ENCODE measurements at regions of chr11 and their contacts with region 1.

Region 1: GRCh38 chr11:13759050-13759449 is 90.6 kb downstream of the FAR1 start:
- DNase-seq: no peak
- H3K4me3 ChIP-seq: no peak overlapping the region
- H3K27ac ChIP-seq: no peak overlapping the region
- H3K4me1 ChIP-seq: no peaks in the 10 kb centered on the region
- H3K27me3 ChIP-seq: no peaks in the 10 kb centered on the region
- CTCF ChIP-seq: no peak
- POLR2A ChIP-seq: no peak

Region 2: DNA sequence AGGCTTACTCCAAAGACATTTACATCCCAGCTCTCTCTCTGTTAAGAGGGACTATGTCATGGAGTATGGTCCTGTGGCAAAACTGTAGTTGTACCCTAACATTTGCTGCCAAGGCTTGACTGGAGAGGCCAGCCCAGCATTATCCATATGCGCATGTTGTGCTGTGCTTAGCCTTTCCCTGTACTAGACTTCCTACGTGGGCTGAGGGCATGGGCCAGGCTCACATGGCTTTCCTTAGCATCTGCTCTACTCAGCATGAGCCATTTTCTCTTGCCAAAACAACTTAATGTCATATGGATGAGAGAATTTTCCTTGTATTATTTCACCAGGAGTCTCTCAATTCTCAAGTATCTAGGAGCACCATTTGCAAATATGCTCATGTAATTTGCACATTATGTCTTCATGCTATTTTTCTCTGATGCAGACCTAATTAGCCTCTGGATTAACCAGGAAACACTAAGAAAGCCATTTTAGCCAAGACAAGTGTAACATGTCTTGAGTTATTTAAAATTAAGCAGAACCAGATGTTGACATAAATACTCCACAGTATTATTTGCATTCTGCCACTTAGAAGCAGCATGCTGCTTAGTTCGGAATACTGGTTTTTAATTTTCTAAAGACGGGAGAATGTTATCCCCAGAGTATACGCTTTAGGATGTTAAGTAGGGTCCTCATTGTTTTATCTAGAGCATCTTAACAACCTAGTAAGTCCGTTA is 162.3 kb before region 1 on chr11:
- intact Hi-C with region 1: no loop called
- DNase-seq: no peak
- H3K4me3 ChIP-seq: no peak overlapping the region
- H3K27ac ChIP-seq: no peak overlapping the region
- H3K4me1 ChIP-seq: no peaks in the 10 kb centered on the region
- H3K27me3 ChIP-seq: no peaks in the 10 kb centered on the region
- CTCF ChIP-seq: no peak
- POLR2A ChIP-seq: no peak

Region 3: GRCh38 chr11:14029971-14030920 is 271.2 kb after region 1 on chr11:
- intact Hi-C with region 1: loop called (anchors 10 kb)
- DNase-seq: peak; percentile 77 to 88
- H3K4me3 ChIP-seq: no peak overlapping the region
- H3K27ac ChIP-seq: peak overlapping the region; percentile 68 to 70
- H3K4me1 ChIP-seq: peaks cover 0 to 10% of the 10 kb centered on the region in 2 donors
- H3K27me3 ChIP-seq: no peaks in the 10 kb centered on the region
- CTCF ChIP-seq: no peak
- POLR2A ChIP-seq: no peak

Measured in breast epithelium (tissue), 4 donors.